ENCODE measurements at regions of chr22 and their contacts with region 1.

Region 1: DNA sequence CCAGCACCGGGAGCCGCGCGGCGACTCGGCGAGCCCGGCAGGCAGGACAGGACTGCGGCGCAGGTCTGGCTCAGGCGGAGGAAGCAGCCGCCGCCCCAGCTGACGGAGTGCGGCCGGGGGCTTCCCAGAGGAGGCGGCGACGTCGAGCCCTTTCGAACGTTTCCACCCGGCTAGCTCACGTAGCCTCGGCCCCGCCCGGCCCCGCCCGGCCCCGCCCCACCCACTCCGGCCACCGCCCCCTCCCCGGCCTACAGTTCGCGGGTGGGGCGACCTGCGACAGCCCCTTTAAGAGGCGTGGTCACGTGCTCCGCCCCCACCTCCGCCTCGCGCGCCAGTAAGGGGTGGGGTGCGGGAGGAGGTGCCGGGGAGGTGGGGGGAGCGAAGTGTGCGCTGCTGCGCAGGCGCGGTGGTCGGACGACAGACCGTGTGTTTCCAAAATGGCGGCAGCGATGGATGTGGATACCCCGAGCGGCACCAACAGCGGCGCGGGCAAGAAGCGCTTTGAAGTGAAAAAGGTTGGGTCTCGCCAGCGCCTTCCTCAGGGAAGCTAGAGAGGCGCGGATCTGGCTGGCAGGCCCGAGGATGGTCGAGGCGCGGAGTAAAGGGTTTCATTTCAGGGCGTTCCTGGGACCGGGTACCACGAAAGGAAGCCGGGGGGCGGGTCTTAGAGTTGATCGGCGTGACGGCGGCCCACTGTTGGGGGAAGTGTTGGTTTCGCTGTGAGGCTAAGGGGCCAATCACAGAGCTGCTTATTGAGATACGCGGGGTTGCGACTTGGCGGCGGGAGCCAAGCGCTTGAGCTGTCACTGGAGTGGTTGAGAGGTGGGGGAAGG is at the start of gene RBX1:
- DNase-seq: peak; percentile 96
- ATAC-seq: peak; percentile 85
- H3K4me3 ChIP-seq: peak within 1 kb of the TSS; percentile 87 to 97
- H3K27ac ChIP-seq: peak within 1 kb of the TSS; percentile 83
- H3K4me1 ChIP-seq: peaks cover 4 to 16% of the 10 kb centered on the region in 2 experiments; a peak in 2 of 4 replicates
- H3K27me3 ChIP-seq: no peaks in the 10 kb centered on the region
- CTCF ChIP-seq: no peak
- POLR2A ChIP-seq: peak; percentile 86
- RAD21 ChIP-seq: no peak
- total RNA-seq, gene RBX1: 51.2 TPM

Region 2: DNA sequence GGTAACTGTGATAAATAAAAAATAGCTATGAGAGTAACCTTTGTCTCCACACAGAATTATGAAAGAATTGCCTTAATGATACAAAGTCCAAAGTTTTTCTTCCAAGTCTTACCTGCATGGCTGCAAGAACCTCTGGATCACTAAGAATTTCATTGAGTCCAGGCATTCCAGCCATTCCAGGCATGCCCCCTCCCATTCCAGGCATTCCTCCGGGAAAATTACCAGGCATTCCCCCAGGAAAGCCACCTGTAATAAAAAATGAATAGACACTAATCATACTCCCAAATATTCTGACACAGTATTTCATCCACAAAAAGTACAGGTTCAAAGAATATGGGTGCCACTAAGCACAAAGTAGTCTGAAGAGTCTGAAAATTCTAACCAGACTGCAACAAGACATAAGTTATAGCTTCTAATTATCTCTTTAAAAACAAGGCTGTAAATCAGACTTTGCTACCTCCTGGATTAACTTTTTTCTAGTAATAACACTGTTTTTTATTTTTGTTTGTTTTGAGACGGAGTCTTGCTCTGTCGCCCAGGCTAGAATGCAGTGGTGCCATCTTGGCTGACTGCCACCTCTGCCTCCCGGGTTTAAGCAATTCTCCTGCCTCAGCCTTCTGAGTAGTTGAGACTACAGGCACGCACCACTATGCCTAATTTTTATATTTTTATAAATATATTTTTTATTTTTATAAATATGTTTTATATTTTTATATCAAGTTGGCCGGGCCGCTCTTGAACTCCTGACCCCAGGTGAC is 124.0 kb before region 1 on chr22:
- CTCF ChIA-PET with region 1: no interaction called
- POLR2A ChIA-PET with region 1: no interaction called
- RAD21 ChIA-PET with region 1: no interaction called
- intact Hi-C with region 1: no loop called
- DNase-seq: no peak
- ATAC-seq: no peak
- H3K4me3 ChIP-seq: no peak overlapping the region
- H3K27ac ChIP-seq: no peak overlapping the region
- H3K4me1 ChIP-seq: peaks cover 0 to 3% of the 10 kb centered on the region in 2 experiments; a peak in 1 of 4 replicates
- H3K27me3 ChIP-seq: no peaks in the 10 kb centered on the region
- CTCF ChIP-seq: no peak
- POLR2A ChIP-seq: no peak
- RAD21 ChIP-seq: no peak

Region 3: GRCh38 chr22:41022470-41023298 is 71.5 kb after region 1 on chr22:
- CTCF ChIA-PET with region 1: no interaction called
- POLR2A ChIA-PET with region 1: interaction called, 5 read pairs
- RAD21 ChIA-PET with region 1: interaction called in 1 of 2 experiments, 5 read pairs
- intact Hi-C with region 1: loop called (anchors 5 kb)
- DNase-seq: peak; percentile 69
- ATAC-seq: peak; percentile 78
- H3K4me3 ChIP-seq: peak overlapping the region; percentile 62 to 77
- H3K27ac ChIP-seq: peak overlapping the region; percentile 100
- H3K4me1 ChIP-seq: peaks cover 23 to 27% of the 10 kb centered on the region in 2 experiments
- H3K27me3 ChIP-seq: no peaks in the 10 kb centered on the region
- CTCF ChIP-seq: no peak
- POLR2A ChIP-seq: peak; percentile 52
- RAD21 ChIP-seq: 0 out of 2 replicates have a peak, but pooled peaks have one; percentile 20

Region 4: GRCh38 chr22:41127451-41127850 is 176.3 kb after region 1 on chr22:
- CTCF ChIA-PET with region 1: no interaction called
- POLR2A ChIA-PET with region 1: no interaction called
- RAD21 ChIA-PET with region 1: no interaction called
- intact Hi-C with region 1: no loop called
- DNase-seq: no peak
- ATAC-seq: no peak
- H3K4me3 ChIP-seq: no peak overlapping the region
- H3K27ac ChIP-seq: no peak overlapping the region
- H3K4me1 ChIP-seq: no peaks in the 10 kb centered on the region
- H3K27me3 ChIP-seq: no peaks in the 10 kb centered on the region
- CTCF ChIP-seq: no peak
- POLR2A ChIP-seq: no peak
- RAD21 ChIP-seq: no peak

Region 5: DNA sequence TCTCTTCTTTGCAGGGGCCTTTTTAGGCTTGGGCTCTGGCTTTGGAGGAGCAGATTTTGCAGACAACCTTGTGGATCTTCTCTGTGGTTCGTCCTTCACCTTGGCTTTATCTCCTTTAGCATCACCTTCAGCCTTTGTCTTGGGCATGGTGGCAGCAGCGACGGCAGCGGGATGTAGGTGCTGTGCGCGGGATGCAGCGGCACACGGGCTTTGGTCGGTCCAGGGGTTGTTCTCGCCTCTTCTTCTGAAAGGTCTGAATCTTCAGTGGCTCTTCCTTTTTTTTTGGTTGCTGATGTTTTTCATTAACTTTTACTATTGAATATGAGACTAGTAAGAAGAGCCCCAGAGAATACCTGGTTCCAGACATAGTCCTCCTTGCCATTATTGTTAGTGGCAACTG is 758.2 kb after region 1 on chr22:
- CTCF ChIA-PET with region 1: no interaction called
- POLR2A ChIA-PET with region 1: no interaction called
- RAD21 ChIA-PET with region 1: no interaction called
- intact Hi-C with region 1: no loop called
- DNase-seq: no peak
- ATAC-seq: no peak
- H3K4me3 ChIP-seq: no peak overlapping the region
- H3K27ac ChIP-seq: no peak overlapping the region
- H3K4me1 ChIP-seq: peaks cover 9% of the 10 kb centered on the region in 2 experiments
- H3K27me3 ChIP-seq: no peaks in the 10 kb centered on the region
- CTCF ChIP-seq: no peak
- POLR2A ChIP-seq: no peak
- RAD21 ChIP-seq: no peak

Measured in HCT116 (cell line).